ENCODE measurements at regions of chr16 and their contacts with region 1.

Region 1: GRCh38 chr16:88993166-88993761 is 16.3 kb upstream of the CBFA2T3 start:
- DNase-seq: no peak

Region 2: GRCh38 chr16:88713568-88714419 is 279.5 kb before region 1 on chr16:
- intact Hi-C with region 1: no loop called
- DNase-seq: no peak

Region 3: GRCh38 chr16:88964636-88965035 is 28.6 kb before region 1 on chr16:
- intact Hi-C with region 1: loop called in 1 of 2 experiments (anchors 1 kb)
- DNase-seq: no peak

Region 4: DNA sequence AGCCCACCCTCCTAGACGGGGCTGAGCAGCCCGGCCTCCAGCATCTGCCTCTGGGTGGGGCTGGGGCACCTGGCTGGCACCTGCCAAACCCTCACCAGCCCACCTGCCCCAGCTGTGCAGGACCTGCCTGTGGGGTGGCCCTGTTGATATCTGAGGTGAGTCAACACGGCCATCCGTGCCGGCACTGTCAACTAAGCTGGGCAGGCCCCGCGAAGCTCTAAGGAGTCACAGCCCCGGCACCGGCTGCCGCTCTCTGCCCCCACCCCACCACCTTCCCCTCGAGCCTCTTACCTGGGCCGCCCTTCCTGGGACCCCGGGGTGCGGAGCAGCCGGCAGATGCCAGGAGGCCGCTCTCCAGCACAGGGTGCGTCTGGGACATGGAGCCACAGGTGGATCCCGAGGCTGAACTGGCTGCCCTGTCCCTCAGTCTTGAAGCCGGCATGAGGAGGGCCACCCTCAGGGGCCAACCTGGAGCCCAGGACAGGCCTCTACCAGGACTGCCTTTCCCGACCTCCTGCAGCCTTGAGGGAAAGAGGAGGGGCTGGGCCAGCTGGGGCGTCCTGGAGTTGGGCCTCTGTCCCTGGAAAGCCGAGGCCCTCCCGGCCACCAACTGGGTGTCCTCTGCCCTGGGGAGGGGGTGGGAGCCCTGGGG is 16.8 kb before region 1 on chr16:
- intact Hi-C with region 1: loop called in 1 of 2 experiments (anchors 1 kb)
- DNase-seq: no peak

Region 5: GRCh38 chr16:89031715-89032659 is 38.7 kb after region 1 on chr16:
- intact Hi-C with region 1: no loop called
- DNase-seq: peak; percentile 85

Measured in posterior vena cava (tissue), 2 donors.